PC-9 (cell line): ENCODE measurements at regions of chr1 and their contacts with region 1.

Region 1: GRCh38 chr1:32716312-32717148 is 14.0 kb upstream of the SYNC start:
- DNase-seq: peak; percentile 94 to 98
- H3K4me3 ChIP-seq: peak overlapping the region; percentile 40; the same call in 1 of the 2 replicates
- H3K27ac ChIP-seq: peak overlapping the region; percentile 83
- H3K4me1 ChIP-seq: peaks cover 39% of the 10 kb centered on the region
- H3K27me3 ChIP-seq: no peaks in the 10 kb centered on the region
- CTCF ChIP-seq: no peak

Region 2: GRCh38 chr1:32741413-32742198 is 25.1 kb after region 1 on chr1:
- CTCF ChIA-PET with region 1: interaction called, 3 read pairs
- POLR2A ChIA-PET with region 1: no interaction called
- intact Hi-C with region 1: loop called (anchors 1 kb)
- DNase-seq: no peak
- H3K4me3 ChIP-seq: peak overlapping the region; percentile 70
- H3K27ac ChIP-seq: peak overlapping the region; percentile 84
- H3K4me1 ChIP-seq: peaks cover 45% of the 10 kb centered on the region
- H3K27me3 ChIP-seq: no peaks in the 10 kb centered on the region
- CTCF ChIP-seq: no peak; the same call in 1 of the 2 replicates

Region 3: DNA sequence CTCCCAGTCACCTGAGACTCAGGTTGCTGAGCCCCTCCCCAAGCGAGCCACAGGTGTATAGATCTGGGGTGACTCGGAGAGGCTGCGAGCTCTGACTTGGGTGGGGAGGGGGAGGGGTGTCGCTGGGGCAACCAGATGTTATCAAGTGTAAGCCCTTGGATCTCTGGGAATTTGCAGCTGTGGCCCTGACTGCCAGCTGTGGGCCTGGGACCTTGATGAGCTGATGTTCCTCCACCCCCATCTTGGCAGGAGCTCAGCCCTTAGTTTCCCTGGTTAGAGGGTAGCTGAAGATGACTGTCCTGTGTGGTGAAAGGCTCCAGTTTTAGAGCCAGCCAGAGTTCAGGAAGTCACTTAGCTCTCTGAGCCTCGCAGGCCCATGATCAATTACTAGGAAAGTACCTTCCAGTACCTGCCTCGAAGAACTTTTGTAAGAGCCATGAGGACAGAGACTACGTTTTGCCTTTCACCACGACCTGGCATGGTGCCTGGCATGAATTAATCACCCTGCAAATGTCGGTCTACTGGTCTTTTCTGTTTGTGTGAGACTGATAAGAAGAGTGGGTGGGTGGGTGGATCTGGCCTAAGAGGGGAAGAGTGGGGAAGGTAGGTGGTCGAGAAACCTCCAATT is 44.8 kb after region 1 on chr1:
- CTCF ChIA-PET with region 1: interaction called, 8 read pairs
- POLR2A ChIA-PET with region 1: no interaction called
- intact Hi-C with region 1: loop called (anchors 2 kb)
- DNase-seq: peak; percentile 84 to 96
- H3K4me3 ChIP-seq: peak overlapping the region; percentile 51
- H3K27ac ChIP-seq: peak overlapping the region; percentile 99
- H3K4me1 ChIP-seq: peaks cover 96% of the 10 kb centered on the region
- H3K27me3 ChIP-seq: no peaks in the 10 kb centered on the region
- CTCF ChIP-seq: no peak

Region 4: GRCh38 chr1:32773018-32773763 is 56.7 kb after region 1 on chr1:
- CTCF ChIA-PET with region 1: interaction called, 20 read pairs
- POLR2A ChIA-PET with region 1: interaction called, 4 read pairs
- intact Hi-C with region 1: loop called (anchors 1 kb)
- DNase-seq: peak; percentile 72 to 85
- H3K4me3 ChIP-seq: no peak overlapping the region
- H3K27ac ChIP-seq: peak overlapping the region; percentile 51; the same call in 1 of the 2 replicates
- H3K4me1 ChIP-seq: peaks cover 62% of the 10 kb centered on the region
- H3K27me3 ChIP-seq: no peaks in the 10 kb centered on the region
- CTCF ChIP-seq: peak; percentile 96

Region 5: DNA sequence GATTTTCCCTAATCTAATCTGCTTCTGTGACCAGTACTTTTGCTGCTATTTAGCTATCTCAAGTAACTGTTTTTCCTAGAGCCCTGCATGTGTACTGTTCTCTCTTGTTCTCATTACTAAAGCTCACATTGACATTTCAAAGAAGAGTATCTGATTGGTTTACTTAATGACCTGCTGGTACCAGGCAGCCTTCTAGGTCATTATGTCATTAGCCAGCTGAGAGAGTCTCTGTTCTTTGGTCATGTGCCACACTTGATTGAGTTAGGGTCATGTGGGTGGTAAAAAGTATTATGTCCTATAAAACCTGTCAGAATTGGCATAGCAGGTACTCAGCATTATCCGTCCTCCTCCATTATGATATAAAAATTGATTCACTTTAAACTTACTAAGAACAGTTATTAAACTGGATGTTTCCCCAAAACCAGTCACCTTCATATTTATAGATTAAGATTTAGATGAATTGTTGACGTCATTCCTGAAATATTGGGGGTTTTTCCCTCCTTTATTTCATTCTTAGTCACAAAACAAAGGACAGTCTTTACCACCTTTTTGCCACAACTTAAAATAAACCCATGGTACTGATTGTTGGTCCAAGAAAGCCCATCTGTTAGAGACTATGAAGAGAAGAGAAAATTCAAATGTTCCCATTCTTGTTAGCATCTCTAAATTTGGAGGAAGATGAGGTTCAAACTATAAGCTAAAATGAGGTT is 132.0 kb after region 1 on chr1:
- CTCF ChIA-PET with region 1: no interaction called
- POLR2A ChIA-PET with region 1: no interaction called
- intact Hi-C with region 1: no loop called
- DNase-seq: no peak
- H3K4me3 ChIP-seq: no peak overlapping the region
- H3K27ac ChIP-seq: no peak overlapping the region
- H3K4me1 ChIP-seq: no peaks in the 10 kb centered on the region
- H3K27me3 ChIP-seq: no peaks in the 10 kb centered on the region
- CTCF ChIP-seq: no peak

Region 6: GRCh38 chr1:32876341-32877210 is 160.0 kb after region 1 on chr1:
- CTCF ChIA-PET with region 1: no interaction called
- POLR2A ChIA-PET with region 1: no interaction called
- intact Hi-C with region 1: loop called (anchors 1 kb)
- DNase-seq: peak in 1 of 2 experiments; percentile 61
- H3K4me3 ChIP-seq: no peak overlapping the region
- H3K27ac ChIP-seq: no peak overlapping the region
- H3K4me1 ChIP-seq: no peaks in the 10 kb centered on the region
- H3K27me3 ChIP-seq: peaks cover 6% of the 10 kb centered on the region; the same call in 1 of the 2 replicates
- CTCF ChIP-seq: peak; percentile 91

Region 7: GRCh38 chr1:32925403-32926162 is 209.1 kb after region 1 on chr1:
- CTCF ChIA-PET with region 1: interaction called, 14 read pairs
- POLR2A ChIA-PET with region 1: no interaction called
- intact Hi-C with region 1: no loop called
- DNase-seq: no peak
- H3K4me3 ChIP-seq: no peak overlapping the region
- H3K27ac ChIP-seq: no peak overlapping the region
- H3K4me1 ChIP-seq: peaks cover 8% of the 10 kb centered on the region; the same call in 1 of the 2 replicates
- H3K27me3 ChIP-seq: no peaks in the 10 kb centered on the region
- CTCF ChIP-seq: no peak

Region 8: DNA sequence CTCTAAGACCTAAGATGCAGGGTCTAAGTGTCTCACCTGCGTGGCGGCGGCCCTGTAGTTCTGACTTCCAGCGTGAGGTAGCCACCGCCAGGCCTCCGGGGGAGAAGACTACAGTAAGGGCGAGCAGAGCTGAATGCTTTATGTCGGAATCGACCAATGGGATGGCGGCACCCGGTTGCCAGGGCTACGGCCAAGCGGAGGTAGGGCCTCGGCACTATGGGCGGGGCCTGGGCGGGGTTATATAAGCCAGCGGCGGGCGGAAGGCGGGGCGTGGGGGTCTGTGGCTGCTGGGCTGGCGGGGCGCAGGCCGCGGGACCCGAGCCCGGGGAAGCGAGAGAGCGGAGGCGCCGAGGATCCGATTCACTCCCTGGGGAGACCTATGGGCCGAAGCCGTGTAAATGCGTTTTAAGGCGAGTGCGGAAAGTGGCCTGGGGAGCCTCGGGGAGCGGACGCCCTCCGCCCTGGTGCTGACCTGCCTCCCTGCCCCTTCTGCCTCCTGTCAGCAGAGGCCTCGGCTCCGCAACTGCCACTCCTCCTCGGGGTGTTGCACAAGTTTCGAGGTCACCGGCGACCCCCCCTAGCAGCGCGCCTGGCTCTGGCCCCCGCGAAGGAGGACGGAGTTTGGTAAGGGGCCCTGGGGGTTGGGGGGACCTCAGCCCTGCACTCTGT is 364.5 kb after region 1 on chr1 and contains the start of gene AZIN2:
- CTCF ChIA-PET with region 1: interaction called, 3 read pairs
- POLR2A ChIA-PET with region 1: no interaction called
- intact Hi-C with region 1: loop called (anchors 10 kb)
- DNase-seq: peak; percentile 83 to 93
- H3K4me3 ChIP-seq: peak within 1 kb of the TSS; percentile 66
- H3K27ac ChIP-seq: no peak within 1 kb of the TSS
- H3K4me1 ChIP-seq: peaks cover 9% of the 10 kb centered on the region
- H3K27me3 ChIP-seq: no peaks in the 10 kb centered on the region
- CTCF ChIP-seq: no peak
- total RNA-seq, gene AZIN2: 7.3 and 11.6 TPM in 2 replicates

Region 9: DNA sequence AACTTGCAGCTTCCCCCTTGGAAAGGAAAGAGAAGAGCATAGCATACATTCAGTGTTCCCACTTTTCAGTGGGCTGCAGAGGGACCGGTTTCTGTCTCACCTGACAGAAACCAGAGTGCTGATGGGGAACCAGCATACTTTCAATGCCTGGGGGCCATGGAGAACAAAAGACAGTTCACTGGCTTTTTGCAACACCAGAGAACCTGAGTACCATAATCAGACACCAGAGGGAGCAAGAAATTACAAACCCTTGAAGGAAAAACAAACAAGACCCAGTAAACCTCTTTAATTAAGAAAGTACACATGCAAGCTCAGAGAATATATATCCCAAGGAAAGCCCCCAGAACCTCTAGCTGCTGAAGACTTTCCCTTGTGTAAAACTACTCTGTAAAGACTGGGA is 1397.4 kb after region 1 on chr1:
- CTCF ChIA-PET with region 1: no interaction called
- POLR2A ChIA-PET with region 1: no interaction called
- intact Hi-C with region 1: no loop called
- DNase-seq: no peak
- H3K4me3 ChIP-seq: no peak overlapping the region
- H3K27ac ChIP-seq: no peak overlapping the region
- H3K4me1 ChIP-seq: no peaks in the 10 kb centered on the region
- H3K27me3 ChIP-seq: no peaks in the 10 kb centered on the region
- CTCF ChIP-seq: peak; percentile 58